SK-MEL-5 (cell line): ENCODE measurements at regions of chr17 and their contacts with region 1.

Region 1: GRCh38 chr17:56581635-56582627 is 11.6 kb upstream of the NOG start:
- DNase-seq: no peak

Region 2: GRCh38 chr17:56640116-56640515 is 58.2 kb after region 1 on chr17:
- in situ Hi-C with region 1: loop called (anchors 5 kb)
- DNase-seq: no peak